ENCODE measurements at regions of chr5 and their contacts with region 1.

Region 1: GRCh38 chr5:178075840-178076548 is 37.3 kb upstream of the N4BP3 start:
- DNase-seq: peak; percentile 72 to 91
- ATAC-seq: peak; percentile 75 to 97 (median 95)
- H3K4me3 ChIP-seq: no peak overlapping the region
- H3K4me3 Mint-ChIP-seq: no peak overlapping the region
- H3K27ac ChIP-seq: no peak overlapping the region
- H3K27ac Mint-ChIP-seq: no peak overlapping the region
- H3K4me1 ChIP-seq: peaks cover 4% of the 10 kb centered on the region
- H3K4me1 Mint-ChIP-seq: no peaks in the 10 kb centered on the region
- H3K27me3 ChIP-seq: peaks cover 5% of the 10 kb centered on the region
- H3K27me3 Mint-ChIP-seq: peaks cover 9 to 14% of the 10 kb centered on the region in 2 donors
- CTCF ChIP-seq: peak; percentile 97

Region 2: GRCh38 chr5:178163772-178164735 is 88.1 kb after region 1 on chr5:
- intact Hi-C with region 1: loop called (anchors 1 kb)
- DNase-seq: peak; percentile 91 to 94
- ATAC-seq: peak; percentile 99 to 100 (median 100)
- H3K4me3 ChIP-seq: no peak overlapping the region
- H3K4me3 Mint-ChIP-seq: no peak overlapping the region
- H3K27ac ChIP-seq: no peak overlapping the region
- H3K27ac Mint-ChIP-seq: no peak overlapping the region
- H3K4me1 ChIP-seq: peaks cover 8% of the 10 kb centered on the region
- H3K4me1 Mint-ChIP-seq: peaks cover 8 to 11% of the 10 kb centered on the region in 2 donors
- H3K27me3 ChIP-seq: peaks cover 8% of the 10 kb centered on the region
- H3K27me3 Mint-ChIP-seq: peaks cover 15 to 25% of the 10 kb centered on the region in 2 donors
- CTCF ChIP-seq: peak; percentile 94

Measured in natural killer cell (primary cell).